Transverse colon (tissue), 4 donors: ENCODE measurements at regions of chr16 and their contacts with region 1.

Region 1: GRCh38 chr16:3059000-3059722 is 6.3 kb upstream of the IL32 start:
- DNase-seq: peak; percentile 92
- H3K4me3 ChIP-seq: peak overlapping the region; percentile 54 to 91 (median 75)
- H3K27ac ChIP-seq: peak overlapping the region; percentile 73 to 88 (median 80)
- H3K4me1 ChIP-seq: peaks cover 11 to 36% (median 23%) of the 10 kb centered on the region in 4 donors
- H3K27me3 ChIP-seq: no peaks in the 10 kb centered on the region
- CTCF ChIP-seq: peak; percentile 78 to 98 (median 89)
- EP300 ChIP-seq: no peak
- POLR2A ChIP-seq: peak; percentile 55

Region 2: GRCh38 chr16:2213817-2214720 is 845.1 kb before region 1 on chr16:
- in situ Hi-C with region 1: no loop called
- intact Hi-C with region 1: no loop called
- DNase-seq: no peak
- H3K4me3 ChIP-seq: peak overlapping the region; percentile 90 to 97 (median 92)
- H3K27ac ChIP-seq: peak overlapping the region; percentile 93 to 97 (median 95)
- H3K4me1 ChIP-seq: peaks cover 18 to 25% (median 22%) of the 10 kb centered on the region in 4 donors
- H3K27me3 ChIP-seq: no peaks in the 10 kb centered on the region
- CTCF ChIP-seq: no peak
- EP300 ChIP-seq: no peak
- POLR2A ChIP-seq: no peak

Region 3: GRCh38 chr16:3129137-3130131 is 70.3 kb after region 1 on chr16:
- in situ Hi-C with region 1: loop called in 2 of 4 experiments (anchors 10 kb)
- intact Hi-C with region 1: loop called (anchors 5 kb)
- DNase-seq: peak; percentile 74
- H3K4me3 ChIP-seq: peak overlapping the region; percentile 17 to 67 (median 37)
- H3K27ac ChIP-seq: peak overlapping the region; percentile 80 to 83 (median 82)
- H3K4me1 ChIP-seq: peaks cover 12 to 46% (median 26%) of the 10 kb centered on the region in 4 donors
- H3K27me3 ChIP-seq: no peaks in the 10 kb centered on the region
- CTCF ChIP-seq: peak; percentile 90 to 95 (median 92)
- EP300 ChIP-seq: no peak
- POLR2A ChIP-seq: peak; percentile 32

Region 4: GRCh38 chr16:3161136-3162018 is 102.2 kb after region 1 on chr16:
- in situ Hi-C with region 1: no loop called
- intact Hi-C with region 1: loop called (anchors 10 kb)
- DNase-seq: peak; percentile 48
- H3K4me3 ChIP-seq: peak overlapping the region in 2 of 4 donors; percentile 3 to 14
- H3K27ac ChIP-seq: peak overlapping the region; percentile 35 to 77 (median 39)
- H3K4me1 ChIP-seq: peaks cover 0 to 26% (median 18%) of the 10 kb centered on the region in 4 donors
- H3K27me3 ChIP-seq: peaks cover 12% of the 10 kb centered on the region
- CTCF ChIP-seq: no peak
- EP300 ChIP-seq: no peak
- POLR2A ChIP-seq: no peak

Region 5: GRCh38 chr16:3214904-3215600 is 155.9 kb after region 1 on chr16:
- in situ Hi-C with region 1: no loop called
- intact Hi-C with region 1: no loop called
- DNase-seq: no peak
- H3K4me3 ChIP-seq: no peak overlapping the region
- H3K27ac ChIP-seq: no peak overlapping the region
- H3K4me1 ChIP-seq: no peaks in the 10 kb centered on the region
- H3K27me3 ChIP-seq: peaks cover 5% of the 10 kb centered on the region
- CTCF ChIP-seq: no peak
- EP300 ChIP-seq: no peak
- POLR2A ChIP-seq: no peak